CD8-positive, alpha-beta T cell (primary cell): ENCODE measurements at regions of chr19 and their contacts with region 1.

Region 1: DNA sequence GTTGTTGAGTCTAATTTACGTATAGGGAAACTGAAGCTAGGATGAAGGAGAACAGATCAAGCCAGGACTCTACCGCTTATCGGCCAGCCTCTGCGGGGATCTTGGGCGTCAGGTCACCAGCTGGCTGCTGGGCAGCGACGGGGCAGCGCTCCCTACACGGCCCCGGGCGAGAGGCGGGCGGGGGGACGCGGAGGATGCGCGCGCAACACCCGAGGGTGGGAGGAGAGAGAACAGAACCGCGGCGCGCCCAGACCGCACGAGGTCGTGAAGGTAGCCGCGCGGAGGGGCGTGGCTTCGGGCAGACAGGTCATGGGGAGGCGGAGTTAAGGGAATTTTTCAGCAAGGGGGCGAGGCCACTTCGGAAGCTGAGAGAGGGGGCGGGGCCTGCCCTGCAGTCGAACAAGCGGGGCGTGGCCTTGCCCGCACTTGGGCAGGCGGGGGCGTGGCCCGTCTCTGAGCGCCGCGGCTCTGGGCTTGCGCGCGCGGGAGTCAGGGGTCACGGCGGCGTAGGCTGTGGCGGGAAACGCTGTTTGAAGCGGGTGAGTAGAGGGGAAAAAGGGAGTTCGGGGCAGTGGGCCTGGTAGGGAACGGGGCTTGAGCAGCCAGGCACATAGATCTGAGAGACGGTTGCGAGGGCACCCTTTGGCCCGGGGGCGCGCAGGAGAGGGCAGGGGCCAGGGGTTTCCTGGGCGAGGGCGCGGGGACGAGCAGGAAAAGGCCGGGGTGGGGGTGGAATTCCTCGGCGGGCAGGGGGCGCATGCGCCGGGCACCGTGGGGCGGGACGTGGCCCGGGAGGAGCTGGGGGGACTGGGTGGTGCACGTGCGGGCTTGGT is at the start of gene POLD1:
- DNase-seq: peak; percentile 98 to 100 (median 98)
- ATAC-seq: peak; percentile 93
- H3K4me3 ChIP-seq: peak within 1 kb of the TSS; percentile 70 to 79
- H3K4me3 Mint-ChIP-seq: peak within 1 kb of the TSS; percentile 97
- H3K27ac ChIP-seq: peak within 1 kb of the TSS; percentile 45 to 72
- H3K27ac Mint-ChIP-seq: peak within 1 kb of the TSS; percentile 91
- H3K4me1 ChIP-seq: peaks cover 14% of the 10 kb centered on the region
- H3K4me1 Mint-ChIP-seq: peaks cover 33% of the 10 kb centered on the region
- H3K27me3 ChIP-seq: no peaks in the 10 kb centered on the region
- H3K27me3 Mint-ChIP-seq: no peaks in the 10 kb centered on the region
- CTCF ChIP-seq: no peak
- total RNA-seq, gene POLD1: 19.4 to 21.8 TPM

Region 2: GRCh38 chr19:50315773-50316448 is 68.2 kb before region 1 on chr19:
- CTCF ChIA-PET with region 1: no interaction called
- POLR2A ChIA-PET with region 1: no interaction called
- intact Hi-C with region 1: no loop called
- DNase-seq: peak in 1 of 9 experiments; percentile 53
- ATAC-seq: peak; percentile 49
- H3K4me3 ChIP-seq: peak overlapping the region in 1 of 2 experiments; percentile 27
- H3K4me3 Mint-ChIP-seq: peak overlapping the region; percentile 42
- H3K27ac ChIP-seq: no peak overlapping the region
- H3K27ac Mint-ChIP-seq: no peak overlapping the region
- H3K4me1 ChIP-seq: peaks cover 12% of the 10 kb centered on the region
- H3K4me1 Mint-ChIP-seq: peaks cover 15% of the 10 kb centered on the region
- H3K27me3 ChIP-seq: peaks cover 20 to 26% of the 10 kb centered on the region in 2 experiments
- H3K27me3 Mint-ChIP-seq: peaks cover 65% of the 10 kb centered on the region
- CTCF ChIP-seq: no peak

Region 3: DNA sequence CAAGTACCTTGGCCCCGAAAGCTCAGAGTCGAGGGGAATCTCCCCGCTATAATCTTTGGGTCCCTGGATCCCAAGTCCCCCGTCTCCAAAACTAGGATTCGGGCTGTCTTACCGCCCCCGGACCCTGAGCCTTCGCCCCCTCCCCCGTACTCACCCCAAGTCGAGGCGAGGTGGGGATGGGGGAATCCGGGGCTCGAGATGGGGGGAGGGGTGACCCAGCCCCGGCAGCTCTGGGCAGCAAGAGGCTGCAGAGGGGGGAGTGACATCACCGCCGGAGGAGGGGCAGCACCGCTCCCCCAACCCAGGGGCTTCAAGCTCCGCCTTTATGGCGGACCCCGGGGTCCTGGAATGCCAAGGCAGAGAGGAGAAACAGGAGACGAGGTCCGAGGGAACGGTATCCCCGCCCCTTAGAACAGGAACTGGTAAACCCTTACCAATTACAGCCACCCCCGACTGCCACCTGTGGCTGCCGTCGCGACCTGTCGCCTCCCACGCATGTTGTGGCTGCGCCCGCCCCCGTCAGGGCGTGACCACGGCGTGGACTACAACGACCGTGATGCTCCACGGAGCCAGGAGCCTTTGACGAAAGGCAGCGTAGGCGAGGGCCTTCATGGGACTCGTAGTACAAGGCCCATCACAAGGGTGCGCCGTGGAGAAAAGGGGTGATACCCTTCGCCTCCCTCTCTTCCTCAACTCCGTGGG is 50.9 kb before region 1 on chr19:
- CTCF ChIA-PET with region 1: no interaction called
- POLR2A ChIA-PET with region 1: no interaction called
- intact Hi-C with region 1: loop called in 1 of 2 experiments (anchors 2 kb)
- DNase-seq: peak; percentile 71 to 93 (median 88)
- ATAC-seq: peak; percentile 74
- H3K4me3 ChIP-seq: peak overlapping the region; percentile 58 to 77
- H3K4me3 Mint-ChIP-seq: peak overlapping the region; percentile 85
- H3K27ac ChIP-seq: no peak overlapping the region
- H3K27ac Mint-ChIP-seq: peak overlapping the region; percentile 24
- H3K4me1 ChIP-seq: peaks cover 48% of the 10 kb centered on the region
- H3K4me1 Mint-ChIP-seq: peaks cover 47% of the 10 kb centered on the region
- H3K27me3 ChIP-seq: peaks cover 27 to 39% of the 10 kb centered on the region in 2 experiments
- H3K27me3 Mint-ChIP-seq: peaks cover 57% of the 10 kb centered on the region
- CTCF ChIP-seq: no peak

Region 4: DNA sequence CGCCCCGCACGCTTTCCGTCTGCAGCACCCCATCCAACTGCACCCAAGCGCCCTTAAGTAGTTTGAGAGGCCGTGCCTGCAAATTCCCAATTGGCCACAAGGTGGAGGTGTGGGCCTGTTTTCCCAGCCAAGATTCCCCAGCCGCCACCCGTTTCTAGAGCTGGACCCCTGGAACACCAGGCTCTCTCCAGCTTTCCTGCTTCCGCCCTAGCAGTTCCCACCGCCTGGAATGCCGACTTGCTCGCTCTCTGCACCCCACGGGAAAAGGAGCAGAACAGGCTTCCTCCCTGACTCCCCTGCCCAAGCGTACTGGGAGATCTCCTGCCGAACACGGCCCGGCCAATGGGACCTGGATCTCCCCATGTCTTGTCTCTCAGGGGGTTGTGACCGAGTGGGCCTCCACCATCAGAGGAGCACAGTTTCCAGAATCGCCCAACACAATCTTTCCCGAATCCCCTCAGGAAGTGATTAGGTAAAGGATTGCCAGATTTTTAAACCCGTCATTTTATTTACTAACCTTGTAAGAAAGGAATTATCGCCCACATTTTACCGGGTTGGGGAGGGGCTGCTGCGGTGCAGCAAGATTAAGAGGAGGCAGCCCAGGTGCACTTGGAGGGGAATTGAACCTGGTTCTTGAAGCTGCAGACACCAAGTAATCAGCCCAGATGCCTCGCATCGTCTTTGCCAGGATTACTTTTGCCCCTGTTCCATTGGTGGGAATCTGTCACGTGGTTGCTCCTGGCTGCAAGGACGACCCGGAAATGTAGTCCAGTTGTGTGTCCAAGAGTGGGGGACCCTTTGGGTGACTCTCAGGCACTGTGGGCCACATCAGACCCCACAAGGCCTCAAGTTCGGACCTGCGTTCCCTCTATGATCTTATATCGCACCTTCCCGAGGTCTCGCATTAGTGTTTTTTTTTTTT is 15.2 kb before region 1 on chr19:
- CTCF ChIA-PET with region 1: interaction called, 5 read pairs
- POLR2A ChIA-PET with region 1: interaction called, 4 read pairs
- intact Hi-C with region 1: loop called in 1 of 2 experiments (anchors 2 kb)
- DNase-seq: peak; percentile 59 to 91 (median 79)
- ATAC-seq: peak; percentile 81
- H3K4me3 ChIP-seq: peak overlapping the region; percentile 52 to 66
- H3K4me3 Mint-ChIP-seq: peak overlapping the region; percentile 87
- H3K27ac ChIP-seq: peak overlapping the region; percentile 32 to 49
- H3K27ac Mint-ChIP-seq: peak overlapping the region; percentile 82
- H3K4me1 ChIP-seq: peaks cover 15% of the 10 kb centered on the region
- H3K4me1 Mint-ChIP-seq: peaks cover 28% of the 10 kb centered on the region
- H3K27me3 ChIP-seq: no peaks in the 10 kb centered on the region
- H3K27me3 Mint-ChIP-seq: no peaks in the 10 kb centered on the region
- CTCF ChIP-seq: peak; percentile 86

Region 5: GRCh38 chr19:50406174-50406819 is 22.2 kb after region 1 on chr19:
- CTCF ChIA-PET with region 1: no interaction called
- POLR2A ChIA-PET with region 1: no interaction called
- intact Hi-C with region 1: no loop called
- DNase-seq: no peak
- ATAC-seq: no peak
- H3K4me3 ChIP-seq: no peak overlapping the region
- H3K4me3 Mint-ChIP-seq: no peak overlapping the region
- H3K27ac ChIP-seq: no peak overlapping the region
- H3K27ac Mint-ChIP-seq: peak overlapping the region; percentile 62
- H3K4me1 ChIP-seq: no peaks in the 10 kb centered on the region
- H3K4me1 Mint-ChIP-seq: no peaks in the 10 kb centered on the region
- H3K27me3 ChIP-seq: no peaks in the 10 kb centered on the region
- H3K27me3 Mint-ChIP-seq: no peaks in the 10 kb centered on the region
- CTCF ChIP-seq: no peak

Region 6: DNA sequence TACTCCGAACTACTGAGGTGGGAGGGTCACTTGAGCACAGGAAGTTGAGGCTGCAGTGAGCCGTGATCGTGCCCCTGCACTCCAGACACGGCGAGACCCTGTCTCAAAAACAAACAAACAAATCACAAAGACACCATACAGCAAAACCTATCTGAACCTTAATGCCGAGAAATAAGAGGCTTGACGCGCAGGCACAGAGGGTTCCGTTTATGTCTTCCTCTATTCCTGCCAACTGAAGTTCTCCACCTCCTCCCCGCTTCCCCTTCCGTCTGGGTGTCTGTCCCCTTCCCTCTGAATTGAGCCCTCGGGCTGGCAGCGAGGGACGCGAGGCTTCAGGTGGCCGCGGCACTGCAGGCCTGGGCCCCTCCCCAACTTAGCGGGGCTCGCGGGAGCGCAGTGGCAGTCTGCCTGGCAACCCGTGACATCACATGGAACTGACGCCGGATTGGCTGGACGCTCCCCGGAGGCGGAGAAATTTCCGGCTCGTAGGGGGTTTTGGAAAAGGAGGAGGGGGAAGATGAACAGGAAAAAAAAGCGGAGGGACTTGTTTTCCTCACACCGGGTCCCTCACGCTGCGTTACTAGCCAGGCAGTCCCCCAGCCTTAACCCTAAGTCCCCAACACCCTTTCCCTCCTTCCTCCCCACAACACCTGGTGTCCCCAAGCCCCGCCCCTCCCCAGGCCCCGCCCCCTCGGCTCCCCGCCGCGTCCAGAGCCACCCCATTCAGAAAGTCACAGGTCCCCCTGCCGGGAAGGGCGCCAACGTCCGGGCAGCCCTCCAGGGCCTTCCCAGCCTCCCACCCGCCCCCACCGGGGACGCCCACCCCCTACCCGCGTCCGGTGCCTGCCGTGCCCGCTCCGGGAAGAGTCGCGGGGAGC is 47.5 kb after region 1 on chr19:
- CTCF ChIA-PET with region 1: no interaction called
- POLR2A ChIA-PET with region 1: interaction called, 3 read pairs
- intact Hi-C with region 1: loop called (anchors 1 kb)
- DNase-seq: peak; percentile 73 to 94 (median 89)
- ATAC-seq: peak; percentile 94
- H3K4me3 ChIP-seq: peak overlapping the region; percentile 58 to 65
- H3K4me3 Mint-ChIP-seq: peak overlapping the region; percentile 88
- H3K27ac ChIP-seq: peak overlapping the region; percentile 43 to 48
- H3K27ac Mint-ChIP-seq: peak overlapping the region; percentile 78
- H3K4me1 ChIP-seq: peaks cover 9% of the 10 kb centered on the region
- H3K4me1 Mint-ChIP-seq: peaks cover 17% of the 10 kb centered on the region
- H3K27me3 ChIP-seq: peaks cover 4 to 15% of the 10 kb centered on the region in 2 experiments
- H3K27me3 Mint-ChIP-seq: peaks cover 21% of the 10 kb centered on the region
- CTCF ChIP-seq: no peak

Region 7: GRCh38 chr19:50739914-50740426 is 355.9 kb after region 1 on chr19:
- CTCF ChIA-PET with region 1: no interaction called
- POLR2A ChIA-PET with region 1: no interaction called
- intact Hi-C with region 1: no loop called
- DNase-seq: no peak
- ATAC-seq: no peak
- H3K4me3 ChIP-seq: no peak overlapping the region
- H3K4me3 Mint-ChIP-seq: no peak overlapping the region
- H3K27ac ChIP-seq: no peak overlapping the region
- H3K27ac Mint-ChIP-seq: no peak overlapping the region
- H3K4me1 ChIP-seq: no peaks in the 10 kb centered on the region
- H3K4me1 Mint-ChIP-seq: no peaks in the 10 kb centered on the region
- H3K27me3 ChIP-seq: no peaks in the 10 kb centered on the region
- H3K27me3 Mint-ChIP-seq: peaks cover 41% of the 10 kb centered on the region
- CTCF ChIP-seq: no peak

Region 8: GRCh38 chr19:50804420-50805272 is 420.6 kb after region 1 on chr19:
- CTCF ChIA-PET with region 1: no interaction called
- POLR2A ChIA-PET with region 1: no interaction called
- intact Hi-C with region 1: loop called (anchors 2 kb)
- DNase-seq: peak; percentile 91 to 99 (median 96)
- ATAC-seq: peak; percentile 95
- H3K4me3 ChIP-seq: peak overlapping the region; percentile 91 to 96
- H3K4me3 Mint-ChIP-seq: peak overlapping the region; percentile 98
- H3K27ac ChIP-seq: peak overlapping the region; percentile 99
- H3K27ac Mint-ChIP-seq: peak overlapping the region; percentile 100
- H3K4me1 ChIP-seq: peaks cover 18% of the 10 kb centered on the region
- H3K4me1 Mint-ChIP-seq: peaks cover 43% of the 10 kb centered on the region
- H3K27me3 ChIP-seq: no peaks in the 10 kb centered on the region
- H3K27me3 Mint-ChIP-seq: no peaks in the 10 kb centered on the region
- CTCF ChIP-seq: no peak